Transverse colon (tissue), 4 donors: ENCODE measurements at regions of chr20 and their contacts with region 1.

Region 1: DNA sequence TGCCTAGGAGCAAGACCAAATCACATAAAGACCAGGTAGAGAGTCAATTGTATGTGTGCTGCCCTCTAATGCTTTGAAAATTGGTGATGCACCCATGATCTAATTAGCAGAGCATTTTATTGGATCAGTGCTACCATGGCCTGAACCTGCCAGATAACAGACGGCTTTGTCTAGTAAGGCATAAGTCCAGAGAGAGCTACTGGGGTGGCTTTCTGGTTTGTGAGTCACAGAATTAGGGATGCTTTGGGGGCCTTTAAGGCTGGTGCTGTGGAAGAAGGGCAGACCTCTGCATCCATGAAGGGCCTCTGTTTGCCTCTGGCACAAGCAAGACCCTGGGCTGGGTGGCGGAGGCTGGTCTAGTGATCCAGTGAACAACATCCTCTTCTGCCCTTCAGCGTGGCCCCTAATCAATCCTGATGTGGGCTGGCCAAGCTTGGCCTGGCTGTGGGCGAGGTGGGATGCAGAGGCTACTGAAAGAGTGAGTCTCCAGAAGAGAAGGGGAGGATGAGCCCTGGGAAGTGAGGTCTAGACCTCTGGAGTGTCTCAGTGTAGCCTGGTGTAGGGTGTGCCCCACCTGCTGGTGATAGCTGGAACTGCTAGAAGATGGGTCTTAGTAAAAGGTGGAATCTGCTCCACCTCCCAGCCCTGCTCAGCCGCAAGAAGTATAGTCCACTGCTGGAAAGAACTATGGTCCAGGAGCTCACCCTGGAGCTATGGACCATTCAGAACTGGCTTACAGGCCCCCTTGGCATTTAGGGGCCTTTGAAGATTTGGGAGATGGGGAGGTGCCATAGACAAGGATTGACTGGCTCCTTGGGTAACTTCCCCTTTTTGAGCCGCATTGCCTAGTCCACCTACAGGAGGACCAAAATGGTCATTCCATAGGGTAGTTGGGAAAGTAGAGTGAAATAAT is 36.7 kb upstream of the AAR2 start:
- DNase-seq: peak; percentile 84
- H3K4me3 ChIP-seq: no peak overlapping the region
- H3K27ac ChIP-seq: no peak overlapping the region
- H3K4me1 ChIP-seq: no peaks in the 10 kb centered on the region
- H3K27me3 ChIP-seq: no peaks in the 10 kb centered on the region
- CTCF ChIP-seq: peak; percentile 83 to 92 (median 86)
- EP300 ChIP-seq: no peak
- POLR2A ChIP-seq: no peak

Region 2: GRCh38 chr20:36154700-36155628 is 44.6 kb before region 1 on chr20 and contains the start of gene EPB41L1:
- in situ Hi-C with region 1: no loop called
- intact Hi-C with region 1: loop called (anchors 5 kb)
- DNase-seq: no peak
- H3K4me3 ChIP-seq: peak within 1 kb of the TSS; percentile 49 to 76 (median 56)
- H3K27ac ChIP-seq: peak within 1 kb of the TSS; percentile 53 to 85 (median 72)
- H3K4me1 ChIP-seq: peaks cover 5 to 13% (median 9%) of the 10 kb centered on the region in 4 donors
- H3K27me3 ChIP-seq: no peaks in the 10 kb centered on the region
- CTCF ChIP-seq: no peak
- EP300 ChIP-seq: no peak
- POLR2A ChIP-seq: no peak
- total RNA-seq, gene EPB41L1: 36.4 to 167 (median 79.4) TPM

Region 3: GRCh38 chr20:36439040-36439730 is 239.6 kb after region 1 on chr20:
- in situ Hi-C with region 1: loop called (anchors 10 to 25 kb)
- intact Hi-C with region 1: loop called (anchors 5 kb)
- DNase-seq: peak; percentile 69
- H3K4me3 ChIP-seq: no peak overlapping the region
- H3K27ac ChIP-seq: no peak overlapping the region
- H3K4me1 ChIP-seq: peaks cover 0 to 4% (median 4%) of the 10 kb centered on the region in 4 donors
- H3K27me3 ChIP-seq: no peaks in the 10 kb centered on the region
- CTCF ChIP-seq: peak; percentile 78 to 87 (median 83)
- EP300 ChIP-seq: no peak
- POLR2A ChIP-seq: no peak

Region 4: DNA sequence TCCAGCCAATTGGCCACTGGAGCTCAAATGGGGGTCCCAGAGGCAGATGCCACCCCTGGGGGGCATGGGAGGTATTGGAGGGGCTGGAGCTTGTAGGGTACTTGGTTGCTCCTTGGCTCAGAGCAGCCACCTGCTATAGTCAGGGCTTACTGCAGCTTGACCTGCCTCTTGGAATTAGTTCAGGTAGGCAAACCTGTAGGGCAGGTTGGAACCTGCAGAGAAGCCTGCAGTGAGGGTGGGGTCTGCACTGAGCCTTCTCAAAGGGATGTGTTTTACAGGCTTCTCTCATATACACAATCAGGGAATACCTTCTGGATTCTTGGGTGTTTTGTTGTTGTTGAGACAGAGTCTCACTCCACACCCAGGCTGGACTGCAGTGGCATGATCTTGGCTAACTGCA is 247.5 kb after region 1 on chr20:
- in situ Hi-C with region 1: loop called (anchors 10 to 25 kb)
- intact Hi-C with region 1: loop called (anchors 5 kb)
- DNase-seq: no peak
- H3K4me3 ChIP-seq: no peak overlapping the region
- H3K27ac ChIP-seq: no peak overlapping the region
- H3K4me1 ChIP-seq: no peaks in the 10 kb centered on the region
- H3K27me3 ChIP-seq: no peaks in the 10 kb centered on the region
- CTCF ChIP-seq: no peak
- EP300 ChIP-seq: no peak
- POLR2A ChIP-seq: no peak

Region 5: GRCh38 chr20:36599912-36600345 is 400.3 kb after region 1 on chr20:
- in situ Hi-C with region 1: no loop called
- intact Hi-C with region 1: loop called (anchors 5 kb)
- DNase-seq: no peak
- H3K4me3 ChIP-seq: no peak overlapping the region
- H3K27ac ChIP-seq: no peak overlapping the region
- H3K4me1 ChIP-seq: peaks cover 0 to 2% (median under 1%) of the 10 kb centered on the region in 4 donors
- H3K27me3 ChIP-seq: no peaks in the 10 kb centered on the region
- CTCF ChIP-seq: no peak
- EP300 ChIP-seq: no peak
- POLR2A ChIP-seq: no peak